ENCODE measurements at regions of chr1 and their contacts with region 1.

Region 1: GRCh38 chr1:32215629-32216480 is 6.3 kb downstream of the TMEM234 start:
- DNase-seq: peak in 8 of 9 donors; percentile 29 to 63 (median 52)
- ATAC-seq: peak; percentile 92
- H3K4me3 ChIP-seq: no peak overlapping the region
- H3K4me3 Mint-ChIP-seq: peak overlapping the region in 6 of 10 donors; percentile 7 to 43 (median 32)
- H3K27ac ChIP-seq: peak overlapping the region; percentile 59
- H3K27ac Mint-ChIP-seq: peak overlapping the region; percentile 25 to 86 (median 63)
- H3K4me1 ChIP-seq: peaks cover under 1 to 12% of the 10 kb centered on the region in 2 donors
- H3K4me1 Mint-ChIP-seq: peaks cover 12 to 31% (median 24%) of the 10 kb centered on the region in 7 donors
- H3K27me3 ChIP-seq: no peaks in the 10 kb centered on the region
- H3K27me3 Mint-ChIP-seq: no peaks in the 10 kb centered on the region

Region 2: DNA sequence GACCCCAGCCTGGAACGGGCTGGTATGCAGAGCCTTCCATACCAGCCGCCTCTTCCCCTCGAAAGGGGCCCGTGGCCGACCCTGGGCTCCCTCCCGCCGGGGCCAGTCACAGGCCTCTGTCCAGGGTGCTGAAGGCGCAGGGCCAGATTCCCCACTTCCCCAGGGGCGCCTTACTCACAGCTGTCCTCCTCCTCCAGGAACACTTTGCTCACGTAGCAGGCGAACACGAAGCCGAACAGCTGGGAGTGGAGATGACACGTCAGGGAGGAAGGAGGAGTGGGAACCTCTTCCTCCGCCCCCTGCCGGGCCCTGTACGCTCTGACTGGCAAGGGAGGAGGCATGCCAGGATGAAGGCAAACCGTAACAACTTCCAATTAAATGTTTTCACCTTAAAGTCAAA is 1033.5 kb before region 1 on chr1:
- CTCF ChIA-PET with region 1: no interaction called
- POLR2A ChIA-PET with region 1: no interaction called
- intact Hi-C with region 1: no loop called
- DNase-seq: peak in 8 of 9 donors; percentile 21 to 72 (median 32)
- ATAC-seq: peak; percentile 72
- H3K4me3 ChIP-seq: no peak overlapping the region
- H3K4me3 Mint-ChIP-seq: peak overlapping the region in 4 of 10 donors; percentile 17 to 40 (median 28)
- H3K27ac ChIP-seq: no peak overlapping the region
- H3K27ac Mint-ChIP-seq: no peak overlapping the region
- H3K4me1 ChIP-seq: no peaks in the 10 kb centered on the region
- H3K4me1 Mint-ChIP-seq: peaks cover 0 to 10% (median 8%) of the 10 kb centered on the region in 7 donors
- H3K27me3 ChIP-seq: peaks cover 3 to 8% of the 10 kb centered on the region in 2 donors
- H3K27me3 Mint-ChIP-seq: peaks cover 33 to 55% (median 50%) of the 10 kb centered on the region in 5 donors

Region 3: DNA sequence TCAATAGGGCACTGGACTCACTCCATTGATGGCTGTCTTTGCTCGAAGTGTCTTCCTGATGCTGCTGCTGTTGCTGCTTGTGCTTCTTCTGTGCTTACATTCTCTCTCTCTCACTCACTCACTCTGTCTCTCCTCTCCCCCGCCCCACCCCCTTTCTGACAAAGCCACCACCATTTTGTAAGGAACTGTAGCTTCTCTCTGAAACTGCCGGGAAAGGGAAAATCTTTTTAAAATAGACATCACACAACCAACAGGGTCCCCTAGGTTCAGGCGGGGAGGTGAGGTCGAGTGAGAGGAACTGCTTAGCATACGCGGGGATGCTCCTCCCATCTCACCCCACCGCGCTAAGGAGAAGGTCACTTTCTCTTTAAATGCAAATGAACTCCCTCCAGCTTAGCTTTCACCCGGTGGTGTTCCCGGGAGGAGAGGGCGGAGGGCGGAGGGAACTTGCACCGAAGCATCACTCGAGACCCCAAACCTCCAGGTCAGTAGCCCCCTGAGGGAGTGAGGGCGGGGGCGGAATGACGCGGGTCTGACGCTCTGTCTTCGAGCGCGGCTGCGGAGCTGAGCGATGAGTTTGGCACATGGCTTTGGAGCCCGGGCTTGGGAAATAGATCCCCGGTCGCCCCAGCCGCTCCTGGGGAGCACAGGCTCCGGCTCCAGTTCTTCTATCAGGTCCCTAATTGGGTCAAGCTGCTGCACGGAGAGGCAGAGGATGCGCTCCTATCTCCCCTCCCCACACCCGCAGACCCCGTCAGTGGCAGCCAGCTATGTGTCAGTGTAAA is 15.4 kb before region 1 on chr1 and contains the start of gene CCDC28B:
- CTCF ChIA-PET with region 1: interaction called, 10 read pairs
- POLR2A ChIA-PET with region 1: interaction called, 16 read pairs
- intact Hi-C with region 1: no loop called
- DNase-seq: peak; percentile 35 to 71 (median 62)
- ATAC-seq: peak; percentile 59
- H3K4me3 ChIP-seq: peak within 1 kb of the TSS; percentile 96
- H3K4me3 Mint-ChIP-seq: peak within 1 kb of the TSS; percentile 78 to 99 (median 94)
- H3K27ac ChIP-seq: peak within 1 kb of the TSS; percentile 99
- H3K27ac Mint-ChIP-seq: peak within 1 kb of the TSS; percentile 72 to 98 (median 91)
- H3K4me1 ChIP-seq: peaks cover 32 to 35% of the 10 kb centered on the region in 2 donors
- H3K4me1 Mint-ChIP-seq: peaks cover 41 to 73% (median 60%) of the 10 kb centered on the region in 7 donors
- H3K27me3 ChIP-seq: no peaks in the 10 kb centered on the region
- H3K27me3 Mint-ChIP-seq: no peaks in the 10 kb centered on the region
- total RNA-seq, gene CCDC28B: 6.2 to 39.0 (median 8.7) TPM

Region 4: GRCh38 chr1:32228771-32229170 is 12.9 kb after region 1 on chr1:
- CTCF ChIA-PET with region 1: interaction called, 13 read pairs
- POLR2A ChIA-PET with region 1: interaction called, 8 read pairs
- intact Hi-C with region 1: no loop called
- DNase-seq: no peak
- ATAC-seq: no peak
- H3K4me3 ChIP-seq: no peak overlapping the region
- H3K4me3 Mint-ChIP-seq: no peak overlapping the region
- H3K27ac ChIP-seq: no peak overlapping the region
- H3K27ac Mint-ChIP-seq: peak overlapping the region in 5 of 9 donors; percentile 14 to 73 (median 36)
- H3K4me1 ChIP-seq: peaks cover 4 to 5% of the 10 kb centered on the region in 2 donors
- H3K4me1 Mint-ChIP-seq: peaks cover 6 to 22% (median 17%) of the 10 kb centered on the region in 7 donors
- H3K27me3 ChIP-seq: no peaks in the 10 kb centered on the region
- H3K27me3 Mint-ChIP-seq: no peaks in the 10 kb centered on the region

Region 5: GRCh38 chr1:32247983-32248889 is 32.4 kb after region 1 on chr1:
- CTCF ChIA-PET with region 1: interaction called, 32 read pairs
- POLR2A ChIA-PET with region 1: interaction called, 7 read pairs
- intact Hi-C with region 1: no loop called
- DNase-seq: peak; percentile 43 to 84 (median 56)
- ATAC-seq: peak; percentile 45
- H3K4me3 ChIP-seq: peak overlapping the region; percentile 52
- H3K4me3 Mint-ChIP-seq: peak overlapping the region; percentile 66 to 100 (median 98)
- H3K27ac ChIP-seq: peak overlapping the region; percentile 91
- H3K27ac Mint-ChIP-seq: peak overlapping the region; percentile 92 to 100 (median 99)
- H3K4me1 ChIP-seq: peaks cover 37 to 51% of the 10 kb centered on the region in 2 donors
- H3K4me1 Mint-ChIP-seq: peaks cover 32 to 60% (median 52%) of the 10 kb centered on the region in 7 donors
- H3K27me3 ChIP-seq: no peaks in the 10 kb centered on the region
- H3K27me3 Mint-ChIP-seq: peaks cover 0 to 2% (median 0%) of the 10 kb centered on the region in 5 donors

Region 6: GRCh38 chr1:32321712-32322291 is 105.9 kb after region 1 on chr1:
- CTCF ChIA-PET with region 1: interaction called, 11 read pairs
- POLR2A ChIA-PET with region 1: interaction called, 8 read pairs
- intact Hi-C with region 1: no loop called
- DNase-seq: peak in 7 of 9 donors; percentile 37 to 73 (median 57)
- ATAC-seq: peak; percentile 90
- H3K4me3 ChIP-seq: peak overlapping the region; percentile 33
- H3K4me3 Mint-ChIP-seq: peak overlapping the region; percentile 58 to 85 (median 74)
- H3K27ac ChIP-seq: peak overlapping the region; percentile 58
- H3K27ac Mint-ChIP-seq: peak overlapping the region; percentile 62 to 96 (median 94)
- H3K4me1 ChIP-seq: peaks cover 33 to 46% of the 10 kb centered on the region in 2 donors
- H3K4me1 Mint-ChIP-seq: peaks cover 27 to 69% (median 47%) of the 10 kb centered on the region in 7 donors
- H3K27me3 ChIP-seq: no peaks in the 10 kb centered on the region
- H3K27me3 Mint-ChIP-seq: no peaks in the 10 kb centered on the region

Region 7: GRCh38 chr1:32413507-32414185 is 197.8 kb after region 1 on chr1:
- CTCF ChIA-PET with region 1: interaction called, 14 read pairs
- POLR2A ChIA-PET with region 1: no interaction called
- intact Hi-C with region 1: loop called (anchors 1 kb)
- DNase-seq: peak; percentile 27 to 78 (median 70)
- ATAC-seq: peak; percentile 90
- H3K4me3 ChIP-seq: no peak overlapping the region
- H3K4me3 Mint-ChIP-seq: no peak overlapping the region
- H3K27ac ChIP-seq: no peak overlapping the region
- H3K27ac Mint-ChIP-seq: peak overlapping the region in 3 of 9 donors; percentile 8 to 26 (median 21)
- H3K4me1 ChIP-seq: no peaks in the 10 kb centered on the region
- H3K4me1 Mint-ChIP-seq: peaks cover 0 to 3% (median 0%) of the 10 kb centered on the region in 7 donors
- H3K27me3 ChIP-seq: peaks cover 0 to 6% of the 10 kb centered on the region in 2 donors
- H3K27me3 Mint-ChIP-seq: peaks cover 4 to 40% (median 8%) of the 10 kb centered on the region in 5 donors